ENCODE measurements at regions of chr20 and their contacts with region 1.

Region 1: DNA sequence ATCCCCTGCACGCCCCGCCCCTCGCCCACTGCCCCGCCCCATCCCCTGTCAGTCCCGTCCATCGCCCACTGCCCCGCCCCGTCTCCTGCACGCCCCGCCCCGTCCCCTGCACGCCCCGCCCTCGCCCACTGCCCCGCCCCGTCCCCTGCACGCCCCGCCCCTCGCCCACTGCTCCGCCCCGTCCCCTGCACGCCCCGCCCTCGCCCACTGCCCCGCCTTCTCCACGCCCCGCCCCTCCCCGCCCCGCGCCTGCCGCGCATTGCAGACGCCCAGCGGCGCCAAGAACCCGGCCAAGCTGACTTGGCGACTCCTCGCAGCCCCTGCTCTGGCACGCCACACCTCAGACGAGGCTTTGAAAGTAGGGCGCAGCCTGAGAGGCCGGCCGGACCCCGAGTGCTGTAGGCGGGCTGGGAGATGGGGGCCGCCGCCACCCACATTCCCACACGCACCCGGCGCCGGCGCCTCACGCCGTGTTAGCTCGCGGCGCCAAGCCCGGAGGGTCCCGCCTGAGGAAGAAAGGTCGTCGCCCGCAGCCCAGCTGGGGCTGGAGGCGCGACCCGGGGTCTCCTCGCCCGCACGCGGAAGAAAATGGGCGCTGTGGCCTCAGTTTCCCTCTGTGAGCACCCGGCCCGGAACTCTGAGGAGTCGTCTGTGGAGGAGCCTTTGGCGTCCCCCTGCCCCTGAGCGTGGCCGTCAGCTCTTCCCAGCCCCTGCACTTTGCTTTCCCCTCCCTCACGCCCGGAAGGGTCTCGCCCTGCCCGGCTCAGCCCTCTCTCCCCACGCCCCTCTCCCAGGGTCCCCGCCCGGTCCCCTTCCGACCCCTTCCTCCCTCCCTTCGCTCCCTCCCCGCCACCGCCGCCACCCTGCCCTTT is at the start of gene RAD21L1:
- DNase-seq: peak; percentile 56
- ATAC-seq: peak; percentile 89
- H3K4me3 Mint-ChIP-seq: peak within 1 kb of the TSS; percentile 76
- H3K27ac Mint-ChIP-seq: no peak within 1 kb of the TSS
- H3K4me1 Mint-ChIP-seq: peaks cover 13% of the 10 kb centered on the region
- H3K27me3 Mint-ChIP-seq: peaks cover 23% of the 10 kb centered on the region
- CTCF ChIP-seq: no peak
- total RNA-seq, gene RAD21L1: not detected in 2 replicates

Region 2: DNA sequence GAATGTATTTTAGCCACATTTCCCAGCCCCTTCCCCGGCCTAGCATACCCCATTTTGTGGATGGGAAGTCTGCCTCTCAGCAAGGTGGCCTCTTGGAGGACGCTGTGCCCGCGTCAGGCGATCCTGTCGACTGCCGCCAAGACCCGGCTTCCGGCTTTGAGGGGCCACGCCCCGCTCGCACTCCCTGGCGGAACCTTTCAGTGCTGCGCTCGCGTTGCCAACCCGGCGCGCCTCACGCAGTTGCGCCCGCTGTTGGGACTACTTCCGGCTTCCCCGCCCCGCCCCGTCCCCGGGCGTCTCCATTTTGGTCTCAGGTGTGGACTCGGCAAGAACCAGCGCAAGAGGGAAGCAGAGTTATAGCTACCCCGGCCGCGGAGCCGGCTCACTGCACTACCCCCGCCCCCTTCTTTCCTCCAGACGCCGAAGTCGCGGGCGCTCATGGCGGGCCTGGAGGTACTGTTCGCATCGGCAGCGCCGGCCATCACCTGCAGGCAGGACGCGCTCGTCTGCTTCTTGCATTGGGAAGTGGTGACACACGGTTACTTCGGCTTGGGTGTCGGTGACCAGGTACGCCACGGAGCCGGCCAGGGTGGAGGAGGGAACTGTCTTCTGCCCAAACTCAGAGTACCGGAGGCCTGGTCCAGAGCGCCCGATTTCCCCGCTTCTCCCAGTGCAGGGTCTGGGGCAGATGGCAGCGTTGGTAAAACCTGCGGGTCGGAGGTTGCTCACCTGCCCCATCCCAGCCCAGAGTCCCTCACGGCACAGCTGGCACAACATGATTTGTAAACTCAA is 107.5 kb before region 1 on chr20 and contains the start of gene PSMF1:
- CTCF ChIA-PET with region 1: no interaction called
- POLR2A ChIA-PET with region 1: no interaction called
- intact Hi-C with region 1: loop called (anchors 5 kb)
- DNase-seq: peak; percentile 98
- ATAC-seq: peak; percentile 94
- H3K4me3 Mint-ChIP-seq: peak within 1 kb of the TSS; percentile 93
- H3K27ac Mint-ChIP-seq: peak within 1 kb of the TSS; percentile 85
- H3K4me1 Mint-ChIP-seq: peaks cover 64% of the 10 kb centered on the region
- H3K27me3 Mint-ChIP-seq: no peaks in the 10 kb centered on the region
- CTCF ChIP-seq: no peak
- total RNA-seq, gene PSMF1: 130 and 137 TPM in 2 replicates

Region 3: DNA sequence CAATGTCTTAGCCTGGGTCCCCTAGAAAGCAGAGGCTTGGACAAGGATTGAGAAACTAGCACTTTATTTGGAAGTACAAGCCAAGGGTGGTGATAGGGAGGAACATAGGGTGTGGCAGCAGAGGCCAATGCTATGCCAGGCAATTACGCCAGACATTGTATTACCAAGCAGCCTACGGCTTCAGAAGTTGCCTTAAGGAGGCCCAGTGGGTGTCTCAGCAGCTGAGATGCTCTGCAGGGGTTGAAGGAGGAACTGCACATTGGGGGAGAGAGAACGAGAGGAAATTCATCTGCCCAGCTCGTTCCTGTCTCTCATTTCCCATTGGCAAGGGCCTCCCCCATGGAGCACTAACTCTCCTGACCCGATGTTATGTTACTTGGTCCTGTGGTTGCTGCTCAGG is 21.9 kb before region 1 on chr20:
- CTCF ChIA-PET with region 1: no interaction called
- POLR2A ChIA-PET with region 1: no interaction called
- intact Hi-C with region 1: no loop called
- DNase-seq: no peak
- ATAC-seq: no peak
- H3K4me3 Mint-ChIP-seq: no peak overlapping the region
- H3K27ac Mint-ChIP-seq: no peak overlapping the region
- H3K4me1 Mint-ChIP-seq: no peaks in the 10 kb centered on the region
- H3K27me3 Mint-ChIP-seq: peaks cover 12% of the 10 kb centered on the region
- CTCF ChIP-seq: no peak

Region 4: DNA sequence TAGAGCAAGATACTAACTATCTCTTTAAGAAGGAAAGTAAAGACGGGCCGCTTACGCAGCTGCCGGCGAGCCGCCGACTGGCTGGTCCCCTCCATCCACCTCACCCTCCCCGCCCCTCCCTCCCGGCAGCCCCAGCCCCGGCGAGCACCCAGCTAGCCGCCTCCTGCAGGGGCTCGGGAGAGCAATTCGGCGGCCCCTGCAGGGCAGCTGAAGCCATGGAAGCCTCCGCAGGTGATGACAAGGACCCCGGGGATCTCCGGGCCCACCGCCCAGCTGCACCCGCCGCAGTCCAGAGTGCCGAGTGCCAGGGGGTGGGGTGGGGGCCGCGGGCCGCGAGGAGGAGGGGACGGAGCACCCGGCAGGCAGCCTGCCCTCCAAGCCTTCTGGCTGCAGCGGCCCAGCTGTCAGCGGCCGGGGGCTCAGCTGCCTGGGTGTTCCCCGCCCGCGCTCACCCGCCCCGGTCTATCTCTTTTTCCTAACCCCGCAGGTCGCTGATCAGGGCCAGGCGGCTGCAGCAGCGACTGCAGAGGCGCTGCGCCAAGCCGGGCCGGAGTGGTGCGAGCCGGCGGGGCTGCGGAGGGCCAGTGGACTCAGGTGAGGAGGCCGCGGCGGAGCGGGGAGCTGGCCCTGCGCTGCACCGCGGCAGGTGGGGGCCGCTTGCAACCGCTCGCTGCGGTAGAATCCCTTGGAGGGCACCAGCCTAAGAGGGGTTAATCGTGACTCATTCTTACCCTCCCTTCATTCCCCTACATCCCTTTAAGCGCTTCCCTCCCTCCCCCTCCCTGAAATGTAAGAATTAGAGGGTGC is 40.4 kb after region 1 on chr20 and contains the start of gene SNPH:
- CTCF ChIA-PET with region 1: no interaction called
- POLR2A ChIA-PET with region 1: no interaction called
- intact Hi-C with region 1: loop called (anchors 1 kb)
- DNase-seq: peak; percentile 45
- ATAC-seq: peak; percentile 92
- H3K4me3 Mint-ChIP-seq: peak within 1 kb of the TSS; percentile 82
- H3K27ac Mint-ChIP-seq: peak within 1 kb of the TSS; percentile 36
- H3K4me1 Mint-ChIP-seq: peaks cover 12% of the 10 kb centered on the region
- H3K27me3 Mint-ChIP-seq: peaks cover 3% of the 10 kb centered on the region
- CTCF ChIP-seq: no peak
- total RNA-seq, gene SNPH: 0.86 and 1.0 TPM in 2 replicates